HCT116 (cell line): ENCODE measurements at regions of chr2 and their contacts with region 1.

Region 1: DNA sequence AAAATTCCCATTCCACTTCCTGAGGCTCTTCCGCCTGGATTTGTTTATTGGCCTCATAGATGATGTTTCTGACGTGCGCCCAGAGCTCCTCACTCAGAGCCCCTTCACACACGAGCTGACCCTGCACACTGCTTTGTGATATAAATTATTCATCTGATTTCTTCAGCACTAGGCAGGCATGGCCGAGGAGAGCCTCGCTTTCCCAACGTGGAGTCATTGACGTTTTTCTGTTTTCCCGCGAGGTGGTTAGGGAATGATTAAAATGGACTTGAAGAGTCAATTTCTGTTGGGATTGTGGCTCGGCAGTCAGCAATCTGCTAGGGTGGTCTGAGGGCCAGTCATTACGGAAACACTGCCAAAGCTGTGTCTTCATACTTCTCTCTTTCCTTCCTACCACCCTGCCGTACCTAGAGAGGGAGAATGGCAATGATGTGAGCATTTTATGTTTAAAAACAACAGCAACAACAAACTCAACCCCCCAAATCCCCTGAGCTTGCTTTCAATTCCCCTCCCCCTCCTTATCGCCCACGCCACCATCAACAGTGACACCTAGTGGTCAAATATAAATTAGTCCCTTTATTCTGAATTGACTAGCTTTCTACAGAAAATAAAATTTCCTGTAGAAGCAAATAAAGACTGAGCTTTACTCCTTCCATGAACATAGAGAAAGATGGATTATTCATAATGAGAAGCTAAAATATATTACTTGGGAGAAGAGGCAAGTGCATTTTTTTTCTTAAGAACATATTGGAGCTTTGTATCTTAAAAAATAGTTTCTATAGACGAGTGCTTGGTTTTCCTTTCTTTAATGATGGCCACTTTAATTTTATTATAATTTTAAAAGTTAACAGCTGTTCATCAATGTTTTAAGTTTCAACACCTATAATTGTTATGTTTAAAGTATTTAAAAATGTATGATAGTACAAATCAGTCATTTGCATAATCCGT is 285.1 kb downstream of the MTX2 start:
- DNase-seq: peak; percentile 43
- ATAC-seq: peak; percentile 49
- H3K4me3 ChIP-seq: peak overlapping the region; percentile 39 to 58
- H3K27ac ChIP-seq: no peak overlapping the region; the same call in 1 of the 2 replicates
- H3K4me1 ChIP-seq: peaks cover 0 to 25% of the 10 kb centered on the region in 2 experiments; a peak in 2 of 4 replicates
- H3K27me3 ChIP-seq: 0 out of 2 replicates have a peak, but pooled peaks cover 7% of the 10 kb centered on the region
- CTCF ChIP-seq: peak; percentile 57 to 81 (median 69)
- POLR2A ChIP-seq: no peak
- RAD21 ChIP-seq: peak; percentile 78

Region 2: DNA sequence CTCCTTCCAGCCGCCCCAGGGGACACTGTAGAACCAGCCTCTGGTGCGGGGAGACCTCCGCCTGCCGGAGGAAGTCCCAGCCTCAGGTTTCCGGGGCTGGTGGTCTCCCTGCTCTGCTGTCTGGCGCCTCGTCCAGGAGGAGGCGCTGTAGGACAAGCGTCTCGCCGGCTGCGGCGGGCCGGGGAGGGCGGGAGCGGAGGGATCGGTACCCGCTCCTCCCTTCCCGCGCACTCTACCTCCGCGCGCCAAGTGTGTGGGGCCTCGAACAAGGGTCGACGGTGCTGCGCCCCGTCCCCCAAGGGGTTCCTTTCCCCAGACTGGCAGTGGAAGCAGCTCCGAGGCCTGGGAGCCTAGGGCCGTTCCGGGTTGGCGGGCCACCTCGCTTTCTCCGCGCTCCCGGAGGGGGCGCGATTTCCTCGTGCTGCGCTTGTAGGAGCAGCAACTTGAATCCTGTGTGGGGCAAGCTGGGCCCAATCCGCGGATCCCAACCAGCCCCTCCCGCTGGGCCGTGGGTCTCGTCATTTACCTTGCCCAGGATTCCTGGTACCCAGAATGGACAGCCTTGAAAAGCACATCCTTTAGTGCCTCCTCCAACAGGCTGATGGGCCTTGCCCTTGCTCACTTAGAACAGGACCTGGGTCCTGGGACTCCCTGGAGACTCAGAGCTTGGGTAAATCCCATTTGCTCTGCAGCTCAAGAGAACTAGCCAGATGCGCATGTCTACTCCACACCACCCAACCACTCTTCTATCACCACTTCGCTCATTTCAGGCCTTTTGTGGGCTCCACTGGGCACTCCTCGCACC is 413.7 kb before region 1 on chr2:
- CTCF ChIA-PET with region 1: interaction called, 38 read pairs
- POLR2A ChIA-PET with region 1: interaction called, 4 read pairs
- RAD21 ChIA-PET with region 1: interaction called, 7 to 9 read pairs
- intact Hi-C with region 1: loop called (anchors 1 kb)
- DNase-seq: peak; percentile 48
- ATAC-seq: peak; percentile 90
- H3K4me3 ChIP-seq: peak overlapping the region; percentile 25 to 40
- H3K27ac ChIP-seq: no peak overlapping the region; the same call in 1 of the 2 replicates
- H3K4me1 ChIP-seq: peaks cover 2 to 18% of the 10 kb centered on the region in 2 experiments; a peak in 3 of 4 replicates
- H3K27me3 ChIP-seq: no peaks in the 10 kb centered on the region
- CTCF ChIP-seq: peak; percentile 83 to 97 (median 86)
- POLR2A ChIP-seq: no peak
- RAD21 ChIP-seq: peak; percentile 98

Region 3: GRCh38 chr2:176454893-176455811 is 99.2 kb before region 1 on chr2:
- CTCF ChIA-PET with region 1: interaction called, 24 read pairs
- POLR2A ChIA-PET with region 1: interaction called, 4 read pairs
- RAD21 ChIA-PET with region 1: interaction called, 5 to 6 read pairs
- intact Hi-C with region 1: no loop called
- DNase-seq: peak; percentile 45
- ATAC-seq: peak; percentile 90
- H3K4me3 ChIP-seq: no peak overlapping the region
- H3K27ac ChIP-seq: no peak overlapping the region
- H3K4me1 ChIP-seq: 0 out of 4 replicates have a peak, but pooled peaks cover 0 to 3% of the 10 kb centered on the region in 2 experiments
- H3K27me3 ChIP-seq: no peaks in the 10 kb centered on the region
- CTCF ChIP-seq: peak; percentile 85 to 91 (median 85)
- POLR2A ChIP-seq: no peak
- RAD21 ChIP-seq: peak; percentile 86

Region 4: DNA sequence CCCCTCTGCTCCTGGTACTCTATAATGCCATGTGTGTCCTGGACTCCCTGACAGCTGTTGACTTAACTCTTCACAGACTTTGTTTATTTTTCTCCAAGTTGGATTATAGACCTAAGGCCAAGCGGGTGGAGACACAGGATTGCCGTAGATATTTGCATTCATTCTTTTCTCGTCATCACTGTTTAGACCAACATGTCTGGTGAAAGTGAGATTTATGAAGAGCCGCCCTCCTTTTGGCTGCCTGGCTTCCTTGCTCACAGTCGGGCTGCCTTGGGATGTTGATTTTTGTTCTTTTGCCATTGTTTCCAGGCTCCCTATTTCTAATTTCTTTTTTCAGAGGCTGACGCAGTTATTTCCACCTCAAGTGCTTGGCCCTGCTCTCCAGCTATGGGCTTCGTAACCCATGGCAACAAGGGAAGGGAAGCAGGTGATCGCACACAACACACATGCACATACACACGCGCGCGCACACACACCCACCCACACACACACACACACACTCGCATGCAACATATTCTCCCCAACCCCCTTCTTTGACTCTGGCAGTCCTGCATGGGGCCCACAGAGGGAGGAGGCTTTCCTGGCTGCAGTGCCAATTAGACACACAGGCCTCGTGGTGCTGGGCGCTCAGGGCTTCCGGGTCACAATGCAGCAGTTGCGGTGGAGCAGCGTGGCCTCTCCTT is 11.4 kb after region 1 on chr2:
- CTCF ChIA-PET with region 1: interaction called, 12 read pairs
- POLR2A ChIA-PET with region 1: no interaction called
- RAD21 ChIA-PET with region 1: no interaction called
- intact Hi-C with region 1: no loop called
- DNase-seq: no peak
- ATAC-seq: no peak
- H3K4me3 ChIP-seq: no peak overlapping the region
- H3K27ac ChIP-seq: no peak overlapping the region
- H3K4me1 ChIP-seq: peaks cover 3 to 9% of the 10 kb centered on the region in 2 experiments; a peak in 2 of 4 replicates
- H3K27me3 ChIP-seq: no peaks in the 10 kb centered on the region
- CTCF ChIP-seq: no peak
- POLR2A ChIP-seq: no peak
- RAD21 ChIP-seq: no peak

Region 5: DNA sequence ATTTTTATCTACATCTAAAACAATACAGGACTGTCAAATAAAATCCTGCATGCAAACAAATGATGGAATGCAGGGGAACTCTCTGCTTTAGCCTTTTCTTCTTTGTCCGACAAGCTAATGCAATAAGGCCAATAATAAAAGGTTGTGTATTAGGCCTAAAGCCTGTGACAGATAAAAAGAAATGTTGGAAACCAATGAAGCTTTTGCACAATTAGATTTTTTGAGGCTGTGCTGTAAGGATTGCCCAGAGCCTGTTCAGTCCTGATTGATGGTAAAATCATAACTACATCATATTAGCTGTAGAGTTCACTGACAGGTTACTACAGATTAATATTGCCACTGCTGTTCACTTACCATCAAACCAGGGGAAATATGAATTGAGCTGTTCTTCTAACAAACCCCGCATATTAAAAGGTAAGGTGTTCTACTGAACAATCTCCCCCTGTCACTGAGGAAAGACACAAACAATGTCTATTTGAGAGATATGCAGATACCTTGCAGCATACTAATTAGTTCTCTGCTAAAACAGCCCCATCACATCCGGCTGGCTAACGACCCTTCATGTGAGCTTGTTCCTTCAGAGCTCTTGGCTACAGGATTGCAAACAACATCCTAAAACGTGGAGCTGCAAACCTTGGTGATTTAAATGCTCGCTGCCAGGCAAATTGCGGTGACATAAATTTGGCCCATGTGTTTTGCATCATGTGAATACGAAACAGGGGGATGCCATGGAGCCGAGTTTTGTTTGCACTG is 20.3 kb after region 1 on chr2:
- CTCF ChIA-PET with region 1: interaction called, 10 read pairs
- POLR2A ChIA-PET with region 1: no interaction called
- RAD21 ChIA-PET with region 1: no interaction called
- intact Hi-C with region 1: no loop called
- DNase-seq: no peak
- ATAC-seq: no peak
- H3K4me3 ChIP-seq: no peak overlapping the region
- H3K27ac ChIP-seq: no peak overlapping the region
- H3K4me1 ChIP-seq: no peaks in the 10 kb centered on the region
- H3K27me3 ChIP-seq: no peaks in the 10 kb centered on the region
- CTCF ChIP-seq: no peak
- POLR2A ChIP-seq: no peak
- RAD21 ChIP-seq: no peak

Region 6: GRCh38 chr2:176582990-176583481 is 28.7 kb after region 1 on chr2:
- CTCF ChIA-PET with region 1: interaction called, 12 read pairs
- POLR2A ChIA-PET with region 1: interaction called, 4 read pairs
- RAD21 ChIA-PET with region 1: interaction called, 3 to 5 read pairs
- intact Hi-C with region 1: no loop called
- DNase-seq: peak; percentile 65
- ATAC-seq: peak; percentile 98
- H3K4me3 ChIP-seq: peak overlapping the region; percentile 14 to 40; a peak in 2 of 4 replicates
- H3K27ac ChIP-seq: no peak overlapping the region
- H3K4me1 ChIP-seq: peaks cover 13 to 24% of the 10 kb centered on the region in 2 experiments; a peak in 3 of 4 replicates
- H3K27me3 ChIP-seq: no peaks in the 10 kb centered on the region
- CTCF ChIP-seq: no peak
- POLR2A ChIP-seq: no peak
- RAD21 ChIP-seq: no peak